Esophagus muscularis mucosa (tissue), 4 donors: ENCODE measurements at regions of chr1 and their contacts with region 1.

Region 1: GRCh38 chr1:45303582-45304310 is 22.9 kb upstream of the HPDL start:
- DNase-seq: peak; percentile 99
- H3K4me3 ChIP-seq: peak overlapping the region; percentile 68 to 88 (median 78)
- H3K27ac ChIP-seq: peak overlapping the region; percentile 82 to 92 (median 89)
- H3K4me1 ChIP-seq: peaks cover 11 to 22% (median 19%) of the 10 kb centered on the region in 4 donors
- H3K27me3 ChIP-seq: no peaks in the 10 kb centered on the region
- CTCF ChIP-seq: peak; percentile 67 to 79 (median 74)
- EP300 ChIP-seq: no peak
- POLR2A ChIP-seq: no peak

Region 2: DNA sequence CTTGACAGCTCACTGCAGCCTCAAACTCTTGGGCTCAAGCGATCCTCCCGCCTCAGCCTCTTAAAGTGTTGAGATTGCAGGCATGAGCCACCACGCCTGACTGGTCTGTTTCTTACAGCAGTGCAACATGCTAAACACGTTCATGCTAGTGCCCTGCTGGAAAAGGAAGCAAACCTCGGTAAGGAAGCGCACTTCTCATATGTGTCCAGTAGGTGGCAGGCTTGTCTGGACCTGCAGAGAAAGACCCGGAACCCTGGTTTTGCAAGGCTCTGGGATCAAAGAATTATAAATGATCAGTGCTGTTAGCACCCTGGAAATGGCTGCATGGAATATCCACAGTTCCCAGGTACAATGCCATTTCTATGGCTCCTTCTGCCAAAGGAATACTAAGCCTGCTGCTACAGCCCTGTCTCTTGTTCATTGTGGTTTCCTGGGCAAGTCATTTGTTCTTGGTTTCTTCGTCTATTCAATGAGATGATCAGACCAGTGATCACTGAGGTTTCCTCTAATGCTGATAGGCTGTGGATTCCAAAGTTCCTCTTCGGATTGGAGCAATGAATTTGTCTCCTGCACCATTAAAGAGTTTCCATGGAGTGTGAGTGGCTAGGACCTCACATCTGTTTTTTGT is 588.7 kb before region 1 on chr1:
- intact Hi-C with region 1: loop called (anchors 10 kb)
- DNase-seq: no peak
- H3K4me3 ChIP-seq: no peak overlapping the region
- H3K27ac ChIP-seq: no peak overlapping the region
- H3K4me1 ChIP-seq: peaks cover 0 to 22% (median 17%) of the 10 kb centered on the region in 4 donors
- H3K27me3 ChIP-seq: no peaks in the 10 kb centered on the region
- CTCF ChIP-seq: peak in 2 of 3 experiments; percentile 82 to 84
- EP300 ChIP-seq: no peak
- POLR2A ChIP-seq: no peak

Region 3: DNA sequence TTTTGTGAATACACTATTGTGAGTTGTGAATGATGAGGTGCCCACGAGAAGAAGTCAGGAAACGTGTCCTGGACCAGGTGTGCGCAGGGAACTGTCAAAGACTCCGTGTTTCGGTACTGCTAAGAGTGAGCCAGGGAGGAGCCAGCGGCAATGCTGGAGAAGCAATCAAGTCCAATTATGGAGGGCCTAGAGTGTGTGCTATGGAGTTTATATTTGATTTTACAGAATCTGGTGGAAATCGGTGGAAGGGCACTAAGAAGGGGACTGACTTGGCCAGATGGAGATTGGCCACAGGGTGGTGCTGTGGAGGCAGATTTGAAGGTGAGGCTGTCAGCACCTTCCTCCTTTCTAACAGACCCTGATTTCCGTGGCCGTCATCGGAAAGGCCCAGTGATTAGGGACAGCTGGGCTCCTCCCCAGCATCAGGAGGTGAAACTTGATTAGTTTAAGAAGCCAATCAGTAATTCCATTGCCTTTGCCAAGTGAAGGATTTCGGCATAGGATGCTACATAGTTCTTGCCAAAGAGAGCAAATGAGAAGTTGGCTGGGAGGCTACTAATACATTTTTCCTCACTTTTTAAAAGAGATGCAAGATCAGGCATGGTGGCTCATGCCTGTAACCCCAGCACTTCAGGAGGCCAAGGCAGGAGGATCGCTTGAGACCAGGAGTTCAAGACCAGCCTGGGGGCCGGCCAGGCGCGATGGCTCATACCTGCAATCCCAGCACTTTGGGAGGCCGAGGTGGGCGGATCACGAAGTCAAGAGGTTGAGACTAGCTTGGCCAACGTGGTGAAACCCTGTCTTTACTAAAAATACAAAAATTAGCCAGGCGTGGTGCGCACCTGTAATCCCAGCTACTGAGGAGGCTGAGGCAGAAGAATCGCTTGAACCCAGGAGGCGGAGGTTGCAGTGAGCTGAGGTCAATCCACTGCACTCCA is 467.7 kb before region 1 on chr1:
- intact Hi-C with region 1: loop called (anchors 10 kb)
- DNase-seq: no peak
- H3K4me3 ChIP-seq: peak overlapping the region in 1 of 4 donors; percentile 8
- H3K27ac ChIP-seq: peak overlapping the region in 1 of 4 donors; percentile 5
- H3K4me1 ChIP-seq: peaks cover 0 to 8% (median 8%) of the 10 kb centered on the region in 4 donors
- H3K27me3 ChIP-seq: no peaks in the 10 kb centered on the region
- CTCF ChIP-seq: peak; percentile 75 to 89 (median 81)
- EP300 ChIP-seq: no peak
- POLR2A ChIP-seq: no peak

Region 4: DNA sequence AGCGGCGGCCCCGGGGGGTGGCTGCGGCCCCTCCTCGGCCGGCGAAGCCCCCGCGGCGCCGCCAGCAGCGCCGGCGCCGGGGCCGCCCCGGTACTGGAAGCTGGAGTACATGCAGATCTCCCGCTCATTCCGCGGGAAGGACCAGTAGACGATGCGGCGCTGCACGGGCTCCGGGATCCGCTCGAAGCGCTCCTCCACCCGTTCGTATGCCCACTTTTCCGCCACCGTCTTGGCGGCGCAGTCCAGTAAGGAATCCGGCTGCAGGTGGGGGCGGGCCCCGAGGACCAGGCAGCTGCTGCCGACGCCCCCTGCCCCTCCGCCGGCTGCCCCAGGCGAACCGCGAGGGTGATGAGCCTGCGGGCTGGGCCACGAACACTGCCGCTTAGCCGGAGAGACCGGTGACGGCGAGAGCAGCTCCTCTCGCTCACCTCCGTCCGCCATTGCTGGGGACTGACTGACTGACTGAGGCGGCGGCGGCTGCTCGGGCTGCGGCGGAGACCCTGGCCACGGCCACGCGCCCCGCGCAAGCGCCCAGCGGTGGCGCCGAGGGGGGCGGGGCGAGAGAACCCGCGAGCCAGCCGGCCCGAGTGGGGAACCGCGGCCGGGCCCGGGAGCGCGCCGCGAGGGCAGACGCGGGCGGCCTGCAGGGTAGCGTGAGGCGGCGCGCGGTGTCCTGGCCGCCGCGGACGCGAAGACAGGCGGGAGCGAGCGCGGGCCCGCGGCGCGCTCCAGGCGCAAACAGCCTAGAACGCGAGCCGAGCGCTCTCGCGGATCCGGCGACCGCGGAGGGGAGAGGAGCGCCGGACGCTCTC is 97.6 kb before region 1 on chr1 and contains the start of gene ZSWIM5:
- intact Hi-C with region 1: loop called (anchors 5 kb)
- DNase-seq: no peak
- H3K4me3 ChIP-seq: peak within 1 kb of the TSS; percentile 84 to 97 (median 88)
- H3K27ac ChIP-seq: peak within 1 kb of the TSS; percentile 87 to 94 (median 92)
- H3K4me1 ChIP-seq: peaks cover 9 to 37% (median 27%) of the 10 kb centered on the region in 4 donors
- H3K27me3 ChIP-seq: no peaks in the 10 kb centered on the region
- CTCF ChIP-seq: no peak
- EP300 ChIP-seq: no peak
- POLR2A ChIP-seq: no peak
- total RNA-seq, gene ZSWIM5: 3.3 to 6.2 (median 5.3) TPM

Region 5: DNA sequence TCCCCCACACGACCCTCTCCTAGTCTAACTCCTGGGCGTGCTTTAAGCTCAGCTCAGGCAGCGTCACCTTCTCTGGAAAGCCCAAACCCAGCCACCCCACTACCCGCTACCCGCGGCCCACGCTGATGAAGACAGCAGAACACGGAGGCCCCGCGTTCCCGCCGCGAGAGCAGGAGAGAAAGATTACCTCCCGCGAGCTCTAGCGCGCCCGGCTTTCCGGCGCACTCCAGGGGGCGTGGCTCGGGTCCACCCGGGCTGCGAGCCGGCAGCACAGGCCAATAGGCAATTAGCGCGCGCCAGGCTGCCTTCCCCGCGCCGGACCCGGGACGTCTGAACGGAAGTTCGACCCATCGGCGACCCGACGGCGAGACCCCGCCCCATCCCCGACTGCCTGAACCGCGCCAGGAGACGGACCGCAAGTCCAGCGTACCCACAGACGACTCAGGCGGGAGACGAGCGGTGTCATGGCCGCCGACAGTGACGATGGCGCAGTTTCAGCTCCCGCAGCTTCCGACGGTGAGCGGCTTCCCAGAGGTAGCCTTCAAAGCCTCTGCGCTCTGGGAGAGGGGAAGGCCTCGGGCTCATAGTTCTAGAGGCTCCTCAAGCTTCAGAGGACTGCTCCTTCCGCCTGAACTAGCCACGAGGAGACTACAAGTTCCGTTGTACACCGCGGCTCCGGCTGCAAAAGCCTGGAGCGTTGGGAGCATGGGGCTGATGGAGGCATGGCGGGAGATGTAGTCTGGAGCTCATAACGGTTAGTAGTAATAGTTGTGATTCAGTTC is 36.2 kb after region 1 on chr1 and contains the starts of genes MUTYH and TOE1:
- intact Hi-C with region 1: loop called (anchors 5 kb)
- DNase-seq: peak; percentile 96
- H3K4me3 ChIP-seq: peak within 1 kb of the TSS; percentile 74 to 91 (median 82)
- H3K27ac ChIP-seq: peak within 1 kb of the TSS; percentile 93 to 97 (median 95)
- H3K4me1 ChIP-seq: peaks cover 21 to 37% (median 29%) of the 10 kb centered on the region in 4 donors
- H3K27me3 ChIP-seq: no peaks in the 10 kb centered on the region
- CTCF ChIP-seq: peak in 1 of 3 experiments; percentile 7
- EP300 ChIP-seq: no peak
- POLR2A ChIP-seq: no peak
- total RNA-seq, gene MUTYH: 10.0 to 22.1 (median 14.9) TPM
- total RNA-seq, gene TOE1: 5.0 to 11.8 (median 7.6) TPM